ENCODE measurements at regions of chrX and their contacts with region 1.

Region 1: GRCh38 chrX:14883826-14884225 is 10.6 kb downstream of the MOSPD2 start:
- DNase-seq: no peak
- H3K4me3 Mint-ChIP-seq: peak overlapping the region; percentile 30
- H3K27ac Mint-ChIP-seq: peak overlapping the region; percentile 80
- H3K4me1 Mint-ChIP-seq: peaks cover 16% of the 10 kb centered on the region
- H3K27me3 Mint-ChIP-seq: no peaks in the 10 kb centered on the region

Region 2: GRCh38 chrX:14899607-14900006 is 15.8 kb after region 1 on chrX:
- intact Hi-C with region 1: loop called (anchors 1 kb)
- DNase-seq: no peak
- H3K4me3 Mint-ChIP-seq: no peak overlapping the region
- H3K27ac Mint-ChIP-seq: peak overlapping the region; percentile 75
- H3K4me1 Mint-ChIP-seq: peaks cover 3% of the 10 kb centered on the region
- H3K27me3 Mint-ChIP-seq: no peaks in the 10 kb centered on the region

Region 3: DNA sequence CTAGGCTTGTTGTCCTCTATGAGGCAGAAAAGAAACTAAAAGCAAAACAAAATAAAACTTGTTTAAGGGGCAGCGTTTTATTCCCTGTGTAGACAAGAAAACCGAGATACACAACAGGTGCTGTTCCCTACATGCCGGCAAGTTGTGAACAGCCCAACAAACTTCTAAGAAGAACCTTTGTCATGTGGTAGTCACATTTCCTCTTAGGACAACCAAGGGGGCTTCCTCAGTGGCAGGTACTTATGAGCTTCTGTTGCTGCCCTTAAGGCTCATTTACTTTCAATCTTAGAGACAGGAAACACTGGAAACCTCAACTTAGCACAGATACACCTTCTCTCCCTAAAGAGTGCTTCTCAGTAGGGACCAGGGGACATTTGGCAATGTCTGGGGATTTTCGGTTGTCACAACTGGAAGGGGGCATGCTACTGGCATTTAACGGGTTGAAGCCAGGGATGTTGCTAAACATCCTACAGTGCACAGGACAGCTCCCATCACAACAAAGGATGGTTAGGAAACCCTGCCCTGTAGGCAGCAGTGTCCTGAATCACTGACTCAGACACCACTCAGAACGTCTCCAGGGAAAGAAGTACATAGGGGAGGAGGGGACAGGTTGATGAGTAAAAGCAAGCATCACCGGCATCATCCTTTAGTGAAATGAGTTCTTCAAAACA is 275.0 kb after region 1 on chrX:
- intact Hi-C with region 1: loop called (anchors 5 kb)
- DNase-seq: peak; percentile 80
- H3K4me3 Mint-ChIP-seq: peak overlapping the region; percentile 85
- H3K27ac Mint-ChIP-seq: peak overlapping the region; percentile 91
- H3K4me1 Mint-ChIP-seq: peaks cover 25% of the 10 kb centered on the region
- H3K27me3 Mint-ChIP-seq: no peaks in the 10 kb centered on the region